MCF 10A (cell line): ENCODE measurements at regions of chr10 and their contacts with region 1.

Region 1: GRCh38 chr10:121927841-121928527 is at the start of gene ATE1:
- DNase-seq: peak; percentile 95
- H3K4me3 Mint-ChIP-seq: peak within 1 kb of the TSS; percentile 93
- H3K27ac Mint-ChIP-seq: peak within 1 kb of the TSS; percentile 98
- H3K4me1 Mint-ChIP-seq: peaks cover 18% of the 10 kb centered on the region
- H3K27me3 Mint-ChIP-seq: no peaks in the 10 kb centered on the region
- CTCF ChIP-seq: no peak
- total RNA-seq, gene ATE1: 33.1 and 40.4 TPM in 2 replicates

Region 2: DNA sequence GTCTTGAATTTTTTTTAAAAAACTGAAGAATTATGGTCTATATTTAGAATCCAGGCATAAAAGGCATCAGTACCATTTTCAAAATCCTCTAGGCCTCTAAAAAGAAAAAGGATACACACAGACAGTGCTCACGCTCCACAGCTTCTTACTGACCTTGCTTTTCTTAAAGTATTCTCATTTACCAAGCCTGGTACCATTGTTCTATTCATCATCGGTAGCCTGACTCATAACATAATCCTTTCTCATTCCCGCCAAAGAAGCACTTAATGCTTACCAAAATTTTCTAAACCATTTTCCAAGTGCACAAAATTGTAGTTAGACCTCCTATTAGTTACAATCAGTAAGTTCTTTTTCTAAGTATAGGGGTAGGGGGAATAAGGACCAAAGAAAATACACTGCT is 54.7 kb before region 1 on chr10:
- CTCF ChIA-PET with region 1: no interaction called
- POLR2A ChIA-PET with region 1: no interaction called
- intact Hi-C with region 1: no loop called
- DNase-seq: no peak
- H3K4me3 Mint-ChIP-seq: no peak overlapping the region
- H3K27ac Mint-ChIP-seq: no peak overlapping the region
- H3K4me1 Mint-ChIP-seq: no peaks in the 10 kb centered on the region
- H3K27me3 Mint-ChIP-seq: no peaks in the 10 kb centered on the region
- CTCF ChIP-seq: no peak

Region 3: GRCh38 chr10:121910673-121911420 is 17.1 kb before region 1 on chr10:
- CTCF ChIA-PET with region 1: no interaction called
- POLR2A ChIA-PET with region 1: interaction called, 10 read pairs
- intact Hi-C with region 1: no loop called
- DNase-seq: peak; percentile 17
- H3K4me3 Mint-ChIP-seq: no peak overlapping the region
- H3K27ac Mint-ChIP-seq: no peak overlapping the region
- H3K4me1 Mint-ChIP-seq: no peaks in the 10 kb centered on the region
- H3K27me3 Mint-ChIP-seq: no peaks in the 10 kb centered on the region
- CTCF ChIP-seq: no peak

Region 4: DNA sequence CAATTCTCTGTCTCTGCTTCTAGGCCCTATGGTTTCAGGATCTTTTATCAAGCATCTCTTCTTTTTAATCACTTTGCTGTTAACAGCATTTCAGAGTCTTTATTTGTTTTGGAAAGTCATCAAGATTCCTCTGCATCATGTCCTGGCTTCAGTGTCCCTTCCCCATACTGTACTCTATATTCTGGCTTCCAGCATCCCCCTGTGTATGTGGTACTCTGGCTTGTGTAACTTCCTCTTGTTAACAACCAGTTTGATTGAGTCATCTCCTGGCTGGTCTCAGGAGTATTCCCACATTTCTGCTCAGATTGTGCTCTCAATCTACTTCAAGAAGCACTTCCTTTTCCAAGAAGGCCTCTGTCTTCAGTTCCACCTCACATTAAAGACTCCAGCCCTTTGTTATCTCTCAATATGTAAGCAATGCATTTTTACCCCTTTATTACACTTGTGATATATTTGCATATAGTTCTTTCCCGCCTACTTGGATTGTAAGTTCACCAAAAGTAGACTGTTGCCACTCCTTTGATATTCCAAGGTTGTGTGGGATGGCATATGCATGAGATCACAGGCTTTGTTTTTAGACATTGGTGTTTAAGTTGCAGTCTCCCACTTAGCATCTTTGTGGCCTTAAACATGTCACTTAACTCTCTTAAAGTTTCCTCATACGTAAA is 14.9 kb after region 1 on chr10:
- CTCF ChIA-PET with region 1: no interaction called
- POLR2A ChIA-PET with region 1: no interaction called
- intact Hi-C with region 1: loop called (anchors 1 kb)
- DNase-seq: peak; percentile 92
- H3K4me3 Mint-ChIP-seq: no peak overlapping the region
- H3K27ac Mint-ChIP-seq: peak overlapping the region; percentile 20
- H3K4me1 Mint-ChIP-seq: peaks cover 19% of the 10 kb centered on the region
- H3K27me3 Mint-ChIP-seq: no peaks in the 10 kb centered on the region
- CTCF ChIP-seq: no peak

Region 5: GRCh38 chr10:121974535-121975294 is 46.7 kb after region 1 on chr10 and contains the start of gene NSMCE4A:
- CTCF ChIA-PET with region 1: interaction called, 8 read pairs
- POLR2A ChIA-PET with region 1: interaction called, 22 read pairs
- intact Hi-C with region 1: loop called (anchors 2 kb)
- DNase-seq: peak; percentile 63
- H3K4me3 Mint-ChIP-seq: peak within 1 kb of the TSS; percentile 77
- H3K27ac Mint-ChIP-seq: peak within 1 kb of the TSS; percentile 16
- H3K4me1 Mint-ChIP-seq: peaks cover 13% of the 10 kb centered on the region
- H3K27me3 Mint-ChIP-seq: no peaks in the 10 kb centered on the region
- CTCF ChIP-seq: peak; percentile 59
- total RNA-seq, gene NSMCE4A: 24.5 and 30.2 TPM in 2 replicates

Region 6: GRCh38 chr10:121994390-121994961 is 66.5 kb after region 1 on chr10:
- CTCF ChIA-PET with region 1: no interaction called
- POLR2A ChIA-PET with region 1: interaction called, 12 read pairs
- intact Hi-C with region 1: no loop called
- DNase-seq: no peak
- H3K4me3 Mint-ChIP-seq: no peak overlapping the region
- H3K27ac Mint-ChIP-seq: peak overlapping the region; percentile 66
- H3K4me1 Mint-ChIP-seq: peaks cover 24% of the 10 kb centered on the region
- H3K27me3 Mint-ChIP-seq: no peaks in the 10 kb centered on the region
- CTCF ChIP-seq: no peak

Region 7: GRCh38 chr10:122019414-122019975 is 91.5 kb after region 1 on chr10:
- CTCF ChIA-PET with region 1: no interaction called
- POLR2A ChIA-PET with region 1: interaction called, 15 read pairs
- intact Hi-C with region 1: no loop called
- DNase-seq: peak; percentile 81
- H3K4me3 Mint-ChIP-seq: peak overlapping the region; percentile 68
- H3K27ac Mint-ChIP-seq: peak overlapping the region; percentile 86
- H3K4me1 Mint-ChIP-seq: peaks cover 21% of the 10 kb centered on the region
- H3K27me3 Mint-ChIP-seq: no peaks in the 10 kb centered on the region
- CTCF ChIP-seq: no peak

Region 8: DNA sequence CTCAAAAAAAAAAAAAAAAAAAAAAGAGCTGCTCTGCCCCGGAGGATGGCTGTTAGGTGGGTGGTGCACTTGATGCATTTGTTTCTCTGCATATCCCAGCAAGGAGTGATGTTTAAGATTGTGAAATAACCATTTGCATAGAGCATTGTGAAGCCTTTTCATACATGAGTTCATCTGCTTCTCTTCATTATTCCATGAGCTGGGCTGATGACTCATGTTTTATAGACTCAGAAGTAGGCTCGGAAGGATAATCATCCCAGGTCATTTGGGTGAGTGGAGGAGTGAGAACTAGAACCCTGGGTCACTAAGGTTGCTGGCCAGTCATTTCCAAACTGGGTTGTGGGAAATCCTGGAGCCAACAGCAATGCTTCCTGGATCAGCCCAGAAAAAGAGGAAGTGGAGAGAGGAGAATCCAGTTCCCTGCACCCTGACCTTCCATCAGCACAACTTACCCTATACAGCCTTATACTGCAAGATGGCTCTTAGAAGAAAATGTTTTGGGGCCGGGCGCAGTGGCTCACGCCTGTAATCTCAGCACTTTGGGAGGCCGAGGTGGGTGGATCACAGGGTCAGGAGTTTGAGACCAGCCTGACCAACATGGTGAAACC is 106.3 kb after region 1 on chr10:
- CTCF ChIA-PET with region 1: no interaction called
- POLR2A ChIA-PET with region 1: no interaction called
- intact Hi-C with region 1: no loop called
- DNase-seq: peak; percentile 76
- H3K4me3 Mint-ChIP-seq: no peak overlapping the region
- H3K27ac Mint-ChIP-seq: no peak overlapping the region
- H3K4me1 Mint-ChIP-seq: peaks cover 5% of the 10 kb centered on the region
- H3K27me3 Mint-ChIP-seq: no peaks in the 10 kb centered on the region
- CTCF ChIP-seq: no peak